Activated T-helper 2 cell treated with anti-CD3 and anti-CD28 coated beads, Interferon-gamma antibody, Interleukin-2, Interleukin-4, amounts not matched to agents 10 μg/mL and 5 μg/mL and 100 μg/mL, durations not matched to agents 14 hours and 24 hours and 36 hours (primary cell): ENCODE measurements at regions of chr1 and their contacts with region 1.

Region 1: GRCh38 chr1:89632657-89633247 is at the start of gene LRRC8C:
- DNase-seq: peak; percentile 84
- H3K4me3 Mint-ChIP-seq: peak within 1 kb of the TSS; percentile 92
- H3K27ac Mint-ChIP-seq: peak within 1 kb of the TSS; percentile 93
- H3K4me1 Mint-ChIP-seq: peaks cover 72% of the 10 kb centered on the region
- H3K27me3 Mint-ChIP-seq: no peaks in the 10 kb centered on the region
- total RNA-seq, gene LRRC8C: 56.1 and 56.5 TPM in 2 replicates

Region 2: DNA sequence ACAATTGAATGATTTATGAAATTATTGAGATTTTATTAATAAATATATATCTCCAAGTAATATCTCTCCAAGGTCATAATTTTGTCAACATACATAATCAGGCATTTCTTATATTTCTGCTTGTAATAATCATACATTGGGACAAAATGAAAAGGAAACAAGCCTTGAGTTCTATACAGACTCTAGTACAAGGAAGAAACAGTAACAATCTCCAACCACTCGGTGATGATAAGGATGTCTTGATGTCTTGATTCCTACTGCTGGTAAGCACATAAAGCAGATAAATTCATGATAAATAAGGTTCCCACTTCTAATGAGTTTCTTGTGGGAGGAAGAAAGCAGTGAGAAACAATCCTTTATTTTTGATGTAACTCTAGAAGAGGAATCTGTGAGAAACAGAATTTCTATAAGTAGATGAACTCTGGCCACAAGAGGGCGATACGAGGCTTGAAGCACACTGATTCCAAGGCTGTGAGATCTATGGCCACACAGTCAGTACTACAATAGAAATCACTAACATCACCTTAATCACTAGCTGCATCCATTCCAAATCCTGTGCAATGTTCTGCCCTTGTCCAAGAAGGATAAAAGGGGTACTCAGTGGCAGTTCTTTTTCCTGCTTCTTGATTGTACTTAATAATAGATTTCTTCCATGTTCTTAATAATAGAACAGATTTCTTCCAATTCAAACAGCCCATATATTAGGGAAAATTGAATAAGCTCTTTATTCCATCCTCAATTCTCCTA is 149.6 kb before region 1 on chr1:
- intact Hi-C with region 1: loop called (anchors 2 kb)
- DNase-seq: peak; percentile 58
- H3K4me3 Mint-ChIP-seq: no peak overlapping the region
- H3K27ac Mint-ChIP-seq: no peak overlapping the region
- H3K4me1 Mint-ChIP-seq: peaks cover 25% of the 10 kb centered on the region
- H3K27me3 Mint-ChIP-seq: no peaks in the 10 kb centered on the region

Region 3: DNA sequence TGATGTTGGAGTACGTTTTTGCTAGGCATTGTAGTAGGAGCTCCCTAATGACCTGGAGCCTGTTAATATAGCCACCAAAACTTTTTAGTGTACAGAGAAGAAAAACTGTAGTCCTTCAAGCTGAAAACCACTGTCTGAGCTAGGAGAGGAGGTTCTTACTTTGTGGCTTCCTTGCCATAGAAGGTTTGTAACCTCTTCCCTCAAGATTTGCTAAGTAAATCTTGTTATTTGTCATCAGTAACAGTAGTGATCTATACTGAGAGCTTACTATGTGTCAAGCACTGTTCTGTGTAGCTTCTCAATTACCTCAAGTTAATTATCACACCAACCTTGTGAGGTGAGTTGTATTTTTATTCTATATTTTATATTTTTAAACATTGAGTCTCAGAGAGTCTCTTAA is 21.0 kb before region 1 on chr1:
- intact Hi-C with region 1: loop called (anchors 1 kb)
- DNase-seq: no peak
- H3K4me3 Mint-ChIP-seq: peak overlapping the region; percentile 81
- H3K27ac Mint-ChIP-seq: peak overlapping the region; percentile 99
- H3K4me1 Mint-ChIP-seq: peaks cover 80% of the 10 kb centered on the region
- H3K27me3 Mint-ChIP-seq: no peaks in the 10 kb centered on the region

Region 4: GRCh38 chr1:89657886-89658285 is 25.1 kb after region 1 on chr1:
- intact Hi-C with region 1: loop called (anchors 1 kb)
- DNase-seq: no peak
- H3K4me3 Mint-ChIP-seq: peak overlapping the region; percentile 14
- H3K27ac Mint-ChIP-seq: peak overlapping the region; percentile 75
- H3K4me1 Mint-ChIP-seq: peaks cover 79% of the 10 kb centered on the region
- H3K27me3 Mint-ChIP-seq: no peaks in the 10 kb centered on the region

Region 5: DNA sequence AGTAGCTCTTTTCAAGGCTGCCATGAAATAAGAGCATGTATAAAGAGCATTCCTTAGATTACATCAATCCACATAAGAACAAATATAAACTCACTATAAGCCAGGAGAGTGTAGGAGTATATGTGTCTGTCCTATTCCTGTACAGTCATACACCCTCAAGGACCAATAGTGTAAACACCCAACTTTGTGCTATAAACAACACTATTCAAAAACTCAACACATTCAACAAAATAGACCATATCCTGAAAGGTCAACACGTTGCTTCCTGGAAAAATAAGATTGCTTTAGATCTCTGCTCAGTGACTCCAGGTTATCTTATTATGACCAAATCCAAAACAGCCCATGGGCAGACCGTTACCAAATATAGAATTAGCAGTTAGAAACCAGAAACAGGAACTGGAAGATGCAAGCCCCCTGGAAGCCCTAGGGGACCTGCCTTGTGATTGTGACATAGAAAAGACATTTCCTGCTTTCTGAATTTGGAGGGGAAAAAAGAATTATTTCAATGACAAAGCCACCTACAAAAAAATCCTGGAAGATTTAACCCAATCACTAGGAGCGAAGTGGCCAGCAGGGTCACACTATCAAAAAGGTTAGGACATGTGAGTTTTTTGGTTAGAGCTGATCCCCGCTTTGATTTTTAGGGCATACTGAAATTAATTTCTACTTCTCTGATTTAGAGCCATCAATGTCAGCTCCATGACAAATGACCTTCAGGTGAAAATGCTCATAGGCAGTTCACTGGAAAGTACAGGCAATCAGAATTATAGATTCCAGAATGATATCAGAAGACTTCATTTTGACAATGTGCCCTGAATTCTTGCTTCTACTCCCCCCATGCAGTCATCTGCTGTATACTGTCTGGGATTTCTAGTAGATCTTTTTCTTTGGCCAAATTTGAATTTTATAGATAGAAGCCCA is 60.1 kb after region 1 on chr1:
- intact Hi-C with region 1: loop called (anchors 2 kb)
- DNase-seq: no peak
- H3K4me3 Mint-ChIP-seq: no peak overlapping the region
- H3K27ac Mint-ChIP-seq: peak overlapping the region; percentile 83
- H3K4me1 Mint-ChIP-seq: peaks cover 81% of the 10 kb centered on the region
- H3K27me3 Mint-ChIP-seq: no peaks in the 10 kb centered on the region

Region 6: GRCh38 chr1:89762779-89763648 is 130.3 kb after region 1 on chr1:
- intact Hi-C with region 1: loop called (anchors 1 kb)
- DNase-seq: peak; percentile 80
- H3K4me3 Mint-ChIP-seq: peak overlapping the region; percentile 89
- H3K27ac Mint-ChIP-seq: peak overlapping the region; percentile 95
- H3K4me1 Mint-ChIP-seq: peaks cover 56% of the 10 kb centered on the region
- H3K27me3 Mint-ChIP-seq: no peaks in the 10 kb centered on the region

Region 7: GRCh38 chr1:89994805-89995597 is 362.2 kb after region 1 on chr1 and contains the start of gene ZNF326:
- intact Hi-C with region 1: loop called (anchors 10 kb)
- DNase-seq: peak; percentile 92
- H3K4me3 Mint-ChIP-seq: peak within 1 kb of the TSS; percentile 98
- H3K27ac Mint-ChIP-seq: peak within 1 kb of the TSS; percentile 98
- H3K4me1 Mint-ChIP-seq: peaks cover 41% of the 10 kb centered on the region
- H3K27me3 Mint-ChIP-seq: peaks cover 5% of the 10 kb centered on the region
- total RNA-seq, gene ZNF326: 32.8 and 33.1 TPM in 2 replicates